Caco-2 (cell line): ENCODE measurements at regions of chr4 and their contacts with region 1.

Region 1: GRCh38 chr4:88144866-88145300 is 13.6 kb downstream of the ABCG2 start:
- DNase-seq: peak; percentile 77 to 83
- H3K4me3 ChIP-seq: no peak overlapping the region
- H3K4me3 Mint-ChIP-seq: peak overlapping the region; percentile 27
- H3K27ac Mint-ChIP-seq: peak overlapping the region; percentile 86
- H3K4me1 ChIP-seq: peaks cover 87% of the 10 kb centered on the region
- H3K4me1 Mint-ChIP-seq: peaks cover 65% of the 10 kb centered on the region
- H3K27me3 ChIP-seq: no peaks in the 10 kb centered on the region
- H3K27me3 Mint-ChIP-seq: no peaks in the 10 kb centered on the region
- CTCF ChIP-seq: no peak

Region 2: GRCh38 chr4:88063634-88064296 is 81.1 kb before region 1 on chr4:
- CTCF ChIA-PET with region 1: no interaction called
- POLR2A ChIA-PET with region 1: no interaction called
- intact Hi-C with region 1: loop called (anchors 2 kb)
- DNase-seq: no peak
- H3K4me3 ChIP-seq: no peak overlapping the region
- H3K4me3 Mint-ChIP-seq: no peak overlapping the region
- H3K27ac Mint-ChIP-seq: peak overlapping the region; percentile 69
- H3K4me1 ChIP-seq: peaks cover 45% of the 10 kb centered on the region
- H3K4me1 Mint-ChIP-seq: peaks cover 27% of the 10 kb centered on the region
- H3K27me3 ChIP-seq: no peaks in the 10 kb centered on the region
- H3K27me3 Mint-ChIP-seq: no peaks in the 10 kb centered on the region
- CTCF ChIP-seq: no peak

Region 3: DNA sequence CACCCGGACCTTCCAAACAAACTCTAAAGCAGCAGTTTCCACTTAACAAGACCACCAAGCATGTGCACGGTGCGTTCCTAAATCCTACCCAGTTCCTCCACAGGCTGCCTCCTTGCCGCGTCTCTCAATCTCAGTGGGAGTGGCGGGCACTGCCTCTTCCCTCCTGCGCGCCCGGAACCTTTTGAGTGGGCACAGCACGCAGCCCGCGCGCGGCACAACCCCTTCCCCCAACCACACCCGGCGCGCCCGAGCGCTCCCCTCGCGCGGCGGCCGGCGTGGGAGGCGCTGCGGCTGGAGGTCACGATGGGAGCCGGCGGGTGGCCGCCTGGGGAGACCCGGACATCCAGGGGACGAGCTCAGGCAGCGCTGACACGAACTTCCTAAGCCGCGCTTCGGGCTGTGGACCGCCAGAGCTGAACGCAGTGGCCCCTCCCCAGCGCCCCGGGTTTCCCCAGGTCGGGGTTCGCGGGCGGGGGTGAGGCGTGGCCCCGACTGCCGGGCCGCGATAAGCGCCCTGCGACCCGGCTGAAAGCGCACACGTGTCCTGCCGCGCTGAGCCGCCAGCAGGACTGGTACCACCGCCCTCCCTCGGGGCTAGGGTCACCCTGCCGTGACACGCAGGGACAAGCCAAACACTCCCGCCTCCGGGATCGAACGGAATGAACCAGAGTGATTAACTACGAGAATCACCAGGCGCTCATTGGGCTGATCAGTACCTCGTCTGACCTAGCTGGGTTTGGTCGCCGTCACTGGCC is 13.8 kb after region 1 on chr4 and contains the start of gene ABCG2:
- CTCF ChIA-PET with region 1: no interaction called
- POLR2A ChIA-PET with region 1: no interaction called
- intact Hi-C with region 1: loop called (anchors 1 kb)
- DNase-seq: peak; percentile 77 to 83
- H3K4me3 ChIP-seq: peak within 1 kb of the TSS; percentile 85
- H3K4me3 Mint-ChIP-seq: peak within 1 kb of the TSS; percentile 80
- H3K27ac Mint-ChIP-seq: peak within 1 kb of the TSS; percentile 67
- H3K4me1 ChIP-seq: peaks cover 20% of the 10 kb centered on the region
- H3K4me1 Mint-ChIP-seq: peaks cover 9% of the 10 kb centered on the region
- H3K27me3 ChIP-seq: no peaks in the 10 kb centered on the region
- H3K27me3 Mint-ChIP-seq: no peaks in the 10 kb centered on the region
- CTCF ChIP-seq: no peak
- total RNA-seq, gene ABCG2: 23.7 and 26.0 TPM in 2 replicates

Region 4: DNA sequence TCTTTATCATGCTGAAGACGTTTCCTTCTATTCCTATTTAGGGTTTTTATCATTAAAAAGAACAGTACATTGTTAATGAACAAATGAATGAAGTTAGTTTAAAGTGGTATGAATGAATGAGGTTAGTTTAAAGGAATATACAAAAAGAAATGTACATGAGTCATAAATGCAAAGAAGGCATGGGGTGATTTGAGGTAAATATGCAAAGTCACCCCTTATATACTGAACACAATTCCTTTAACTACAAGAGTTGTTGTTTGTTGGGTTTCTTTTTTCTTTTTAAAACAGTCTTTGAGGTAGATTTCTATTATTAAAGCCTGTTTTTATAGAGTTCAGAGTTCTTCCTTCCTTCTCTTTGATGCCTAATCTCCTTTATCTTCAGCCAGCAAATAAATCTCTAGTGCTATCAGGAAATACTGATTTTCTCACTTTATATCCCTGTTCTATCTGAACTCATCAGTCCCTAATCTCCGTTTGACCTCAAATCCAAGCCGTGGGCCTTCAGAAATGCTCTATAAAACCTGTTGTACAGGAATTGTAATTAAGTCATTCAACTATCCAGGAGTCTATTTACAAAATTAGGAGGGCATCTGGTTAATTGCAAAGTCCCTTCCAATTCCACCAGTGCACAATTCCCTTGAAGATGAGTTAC is 45.1 kb after region 1 on chr4:
- CTCF ChIA-PET with region 1: no interaction called
- POLR2A ChIA-PET with region 1: no interaction called
- intact Hi-C with region 1: loop called (anchors 1 kb)
- DNase-seq: peak; percentile 50 to 72
- H3K4me3 ChIP-seq: no peak overlapping the region
- H3K4me3 Mint-ChIP-seq: peak overlapping the region; percentile 34
- H3K27ac Mint-ChIP-seq: peak overlapping the region; percentile 50
- H3K4me1 ChIP-seq: peaks cover 23% of the 10 kb centered on the region
- H3K4me1 Mint-ChIP-seq: peaks cover 21% of the 10 kb centered on the region
- H3K27me3 ChIP-seq: no peaks in the 10 kb centered on the region
- H3K27me3 Mint-ChIP-seq: no peaks in the 10 kb centered on the region
- CTCF ChIP-seq: no peak

Region 5: DNA sequence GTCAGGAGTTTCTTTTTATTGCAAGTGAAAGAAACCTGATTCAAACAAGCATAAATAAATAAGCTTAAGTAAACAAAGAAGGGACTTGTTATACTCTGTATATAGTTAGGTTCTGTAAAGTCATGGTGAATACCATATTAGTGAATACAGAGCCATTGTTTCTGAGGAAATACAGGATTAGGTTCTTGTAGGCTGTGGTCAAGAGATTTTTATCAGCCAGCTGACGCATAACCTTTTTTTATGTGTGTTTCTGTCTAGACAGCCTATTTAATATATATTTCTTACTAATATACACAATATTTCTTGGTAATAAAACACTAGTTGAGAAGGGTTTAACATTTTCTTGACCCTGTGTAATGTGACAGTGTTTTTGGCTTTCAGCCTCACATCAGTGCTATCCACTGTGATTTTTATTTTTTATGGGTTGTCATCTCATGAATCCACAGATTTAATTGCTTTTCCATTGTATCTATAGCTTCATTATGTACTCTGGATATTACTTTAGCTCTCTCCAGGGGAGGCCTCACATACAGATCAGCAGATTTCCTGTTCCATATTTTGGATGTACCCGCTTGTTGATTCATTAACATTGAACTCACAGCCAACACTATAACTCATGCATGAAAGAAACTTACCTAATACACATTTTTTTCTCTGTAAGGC is 455.4 kb after region 1 on chr4:
- CTCF ChIA-PET with region 1: no interaction called
- POLR2A ChIA-PET with region 1: no interaction called
- intact Hi-C with region 1: no loop called
- DNase-seq: no peak
- H3K4me3 ChIP-seq: no peak overlapping the region
- H3K4me3 Mint-ChIP-seq: no peak overlapping the region
- H3K27ac Mint-ChIP-seq: no peak overlapping the region
- H3K4me1 ChIP-seq: 0 out of 2 replicates have a peak, but pooled peaks cover 13% of the 10 kb centered on the region
- H3K4me1 Mint-ChIP-seq: peaks cover 9% of the 10 kb centered on the region
- H3K27me3 ChIP-seq: no peaks in the 10 kb centered on the region
- H3K27me3 Mint-ChIP-seq: no peaks in the 10 kb centered on the region
- CTCF ChIP-seq: no peak